Ovary (tissue), 10 donors: ENCODE measurements at regions of chr14 and their contacts with region 1.

Region 1: GRCh38 chr14:34722717-34723545 is 8.5 kb upstream of the CFL2 start:
- DNase-seq: peak; percentile 31 to 63 (median 41)
- H3K4me3 ChIP-seq: no peak overlapping the region
- H3K27ac ChIP-seq: peak overlapping the region in 1 of 2 donors; percentile 36
- H3K4me1 ChIP-seq: no peaks in the 10 kb centered on the region
- H3K27me3 ChIP-seq: no peaks in the 10 kb centered on the region
- CTCF ChIP-seq: peak; percentile 43 to 81 (median 81)
- EP300 ChIP-seq: no peak
- POLR2A ChIP-seq: no peak

Region 2: GRCh38 chr14:34671716-34672115 is 51.2 kb before region 1 on chr14:
- intact Hi-C with region 1: loop called (anchors 5 to 10 kb)
- DNase-seq: no peak
- H3K4me3 ChIP-seq: no peak overlapping the region
- H3K27ac ChIP-seq: no peak overlapping the region
- H3K4me1 ChIP-seq: no peaks in the 10 kb centered on the region
- H3K27me3 ChIP-seq: no peaks in the 10 kb centered on the region
- CTCF ChIP-seq: no peak
- EP300 ChIP-seq: no peak
- POLR2A ChIP-seq: no peak

Region 3: DNA sequence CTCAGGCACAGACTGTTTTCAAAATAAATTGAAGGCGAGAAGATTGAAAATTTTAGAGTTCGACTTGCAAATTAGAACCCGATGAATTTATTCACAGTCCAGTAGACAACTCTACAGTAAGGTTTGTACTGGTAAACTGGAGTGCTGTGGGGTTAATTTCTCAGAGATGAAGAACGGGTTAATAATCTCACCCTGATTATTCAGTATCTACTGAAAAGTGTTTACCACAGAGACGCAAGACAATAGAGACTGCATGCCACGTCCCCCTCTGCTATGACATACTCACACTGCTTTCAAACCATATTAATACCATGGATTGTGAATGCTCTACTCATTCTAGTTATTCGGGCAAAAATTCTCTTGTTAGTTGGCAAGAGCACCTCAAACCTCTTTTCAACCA is 44.6 kb before region 1 on chr14:
- intact Hi-C with region 1: loop called (anchors 5 to 10 kb)
- DNase-seq: no peak
- H3K4me3 ChIP-seq: no peak overlapping the region
- H3K27ac ChIP-seq: no peak overlapping the region
- H3K4me1 ChIP-seq: no peaks in the 10 kb centered on the region
- H3K27me3 ChIP-seq: no peaks in the 10 kb centered on the region
- CTCF ChIP-seq: no peak
- EP300 ChIP-seq: no peak
- POLR2A ChIP-seq: no peak

Region 4: GRCh38 chr14:35046048-35046741 is 323.3 kb after region 1 on chr14 and contains the start of gene FAM177A1:
- intact Hi-C with region 1: no loop called
- DNase-seq: peak; percentile 97 to 98 (median 97)
- H3K4me3 ChIP-seq: peak within 1 kb of the TSS; percentile 77
- H3K27ac ChIP-seq: peak within 1 kb of the TSS; percentile 48 to 92
- H3K4me1 ChIP-seq: no peaks in the 10 kb centered on the region
- H3K27me3 ChIP-seq: no peaks in the 10 kb centered on the region
- CTCF ChIP-seq: no peak
- EP300 ChIP-seq: peak; percentile 68
- POLR2A ChIP-seq: peak; percentile 82
- total RNA-seq, gene FAM177A1: 15.7 to 45.9 (median 35.5) TPM